Left lung (tissue), 14 donors: ENCODE measurements at regions of chr5 and their contacts with region 1.

Region 1: GRCh38 chr5:42811591-42812446 is at the start of gene SELENOP:
- DNase-seq: peak in 3 of 4 donors; percentile 56 to 94 (median 93)
- ATAC-seq: peak; percentile 92
- H3K4me3 ChIP-seq: peak within 1 kb of the TSS; percentile 46 to 49
- H3K27ac ChIP-seq: peak within 1 kb of the TSS; percentile 64 to 84
- H3K4me1 ChIP-seq: peaks cover 4 to 17% of the 10 kb centered on the region in 2 donors
- H3K27me3 ChIP-seq: no peaks in the 10 kb centered on the region
- CTCF ChIP-seq: no peak
- polyA plus RNA-seq, gene SELENOP: 426 to 826 (median 730) TPM

Region 2: DNA sequence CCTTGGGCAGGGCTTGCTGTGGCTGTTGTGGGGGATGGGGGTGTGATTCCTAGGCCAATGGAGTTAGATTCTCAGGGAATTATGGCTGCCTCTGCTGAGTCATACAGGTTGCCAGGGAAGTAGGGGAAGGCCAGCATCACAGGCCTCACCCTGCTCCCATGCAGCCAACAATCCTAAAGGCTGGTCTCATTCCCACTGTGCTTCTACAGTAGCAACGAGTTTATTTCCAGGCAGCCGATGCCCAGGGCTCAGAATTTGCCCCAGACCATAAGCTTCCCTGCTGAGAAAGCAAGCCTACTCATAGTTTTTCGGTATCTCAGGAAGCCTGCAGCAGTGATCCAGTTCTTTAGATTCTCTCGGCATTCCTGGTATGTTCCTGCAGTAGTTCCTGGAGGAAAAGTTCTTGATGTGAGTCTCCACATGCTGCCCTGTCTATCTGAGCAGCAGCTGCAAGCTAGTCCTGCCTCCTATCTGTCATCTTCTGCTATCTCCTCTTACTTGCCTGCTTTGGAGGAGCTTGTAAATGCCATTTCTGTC is 59.1 kb after region 1 on chr5:
- intact Hi-C with region 1: loop called in 1 of 2 experiments (anchors 10 kb)
- DNase-seq: no peak
- ATAC-seq: no peak
- H3K4me3 ChIP-seq: no peak overlapping the region
- H3K27ac ChIP-seq: no peak overlapping the region
- H3K4me1 ChIP-seq: peaks cover 0 to 6% of the 10 kb centered on the region in 2 donors
- H3K27me3 ChIP-seq: no peaks in the 10 kb centered on the region
- CTCF ChIP-seq: no peak